H1 (cell line): ENCODE measurements at regions of chr7 and their contacts with region 1.

Region 1: DNA sequence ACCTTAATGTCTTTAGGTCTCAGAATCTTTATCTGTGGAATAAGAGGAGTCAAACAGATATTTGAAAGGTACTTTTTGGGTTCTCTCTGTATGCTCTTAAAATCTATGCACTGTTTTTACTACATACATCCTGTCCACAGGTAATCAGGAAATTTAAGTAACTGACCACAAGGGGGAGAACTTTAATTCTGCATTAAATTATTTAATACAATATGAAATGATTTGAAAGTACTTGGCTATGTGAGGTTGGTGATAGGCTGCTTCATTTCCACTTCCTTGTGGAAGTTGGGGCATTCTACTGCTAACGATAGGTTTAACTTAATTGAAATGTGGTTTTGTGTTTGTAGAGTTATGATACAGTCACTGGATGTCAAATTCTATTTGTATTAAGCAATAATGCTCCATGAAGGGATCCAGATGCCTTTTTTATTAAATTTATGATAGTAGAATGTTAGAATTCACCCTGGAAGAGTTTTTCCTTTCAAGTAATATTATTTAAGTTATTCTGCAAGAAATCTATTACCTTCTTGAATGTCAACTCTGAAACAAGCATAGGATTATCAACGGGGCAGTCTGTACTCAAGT is 6.0 kb downstream of the TEX47 start:
- DNase-seq: no peak
- H3K4me3 ChIP-seq: no peak overlapping the region
- H3K27ac ChIP-seq: no peak overlapping the region
- H3K4me1 ChIP-seq: no peaks in the 10 kb centered on the region
- H3K27me3 ChIP-seq: no peaks in the 10 kb centered on the region
- CTCF ChIP-seq: peak in 2 of 3 experiments; percentile 14 to 48; a peak in 2 of 4 replicates
- EP300 ChIP-seq: no peak
- POLR2A ChIP-seq: no peak
- RAD21 ChIP-seq: no peak; a peak in 1 of 4 replicates

Region 2: DNA sequence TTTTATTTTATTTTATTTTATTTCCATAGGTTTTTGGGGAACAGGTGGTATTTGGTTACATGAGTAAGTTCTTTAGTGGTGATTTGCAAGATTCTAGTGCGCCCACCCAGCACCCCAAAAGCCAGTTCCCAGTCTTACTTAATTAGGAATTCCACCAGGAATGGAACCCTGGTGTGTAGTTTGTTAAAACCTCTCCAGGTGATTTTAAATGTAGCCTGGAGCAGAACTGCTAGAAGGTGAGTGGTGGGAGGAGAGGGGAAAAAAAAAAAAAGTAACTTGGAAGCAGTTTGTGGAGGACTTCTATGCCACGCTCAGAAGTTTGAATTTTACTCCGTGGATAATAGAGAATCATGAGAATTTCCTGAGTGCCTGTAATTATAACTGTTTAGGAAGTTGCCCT is 11.5 kb after region 1 on chr7:
- CTCF ChIA-PET with region 1: interaction called, 13 read pairs
- POLR2A ChIA-PET with region 1: no interaction called
- DNase-seq: no peak
- H3K4me3 ChIP-seq: no peak overlapping the region
- H3K27ac ChIP-seq: no peak overlapping the region
- H3K4me1 ChIP-seq: no peaks in the 10 kb centered on the region
- H3K27me3 ChIP-seq: no peaks in the 10 kb centered on the region
- CTCF ChIP-seq: no peak
- EP300 ChIP-seq: no peak
- POLR2A ChIP-seq: no peak
- RAD21 ChIP-seq: no peak

Region 3: GRCh38 chr7:88881136-88881535 is 91.6 kb after region 1 on chr7:
- CTCF ChIA-PET with region 1: no interaction called
- POLR2A ChIA-PET with region 1: no interaction called
- DNase-seq: no peak
- H3K4me3 ChIP-seq: no peak overlapping the region
- H3K27ac ChIP-seq: no peak overlapping the region
- H3K4me1 ChIP-seq: no peaks in the 10 kb centered on the region; a peak in 1 of 7 replicates
- H3K27me3 ChIP-seq: no peaks in the 10 kb centered on the region
- CTCF ChIP-seq: no peak
- EP300 ChIP-seq: no peak
- POLR2A ChIP-seq: no peak
- RAD21 ChIP-seq: no peak

Region 4: GRCh38 chr7:89160107-89160506 is 370.5 kb after region 1 on chr7:
- CTCF ChIA-PET with region 1: no interaction called
- POLR2A ChIA-PET with region 1: no interaction called
- DNase-seq: no peak
- H3K4me3 ChIP-seq: no peak overlapping the region
- H3K27ac ChIP-seq: no peak overlapping the region
- H3K4me1 ChIP-seq: no peaks in the 10 kb centered on the region
- H3K27me3 ChIP-seq: no peaks in the 10 kb centered on the region
- CTCF ChIP-seq: no peak
- EP300 ChIP-seq: no peak
- POLR2A ChIP-seq: no peak
- RAD21 ChIP-seq: no peak